B cell (primary cell): ENCODE measurements at regions of chr11 and their contacts with region 1.

Region 1: GRCh38 chr11:69675811-69676371 is 738 bp upstream of the LTO1 start:
- DNase-seq: no peak
- ATAC-seq: no peak
- H3K4me3 ChIP-seq: peak overlapping the region in 4 of 5 experiments; percentile 73 to 92 (median 80)
- H3K4me3 Mint-ChIP-seq: peak overlapping the region; percentile 94
- H3K27ac ChIP-seq: no peak overlapping the region
- H3K27ac Mint-ChIP-seq: no peak overlapping the region
- H3K4me1 ChIP-seq: peaks cover 20 to 23% of the 10 kb centered on the region in 2 donors
- H3K4me1 Mint-ChIP-seq: peaks cover 28% of the 10 kb centered on the region
- H3K27me3 ChIP-seq: peaks cover 0 to 3% (median 0%) of the 10 kb centered on the region in 4 experiments
- H3K27me3 Mint-ChIP-seq: peaks cover 6% of the 10 kb centered on the region
- CTCF ChIP-seq: no peak

Region 2: GRCh38 chr11:69380921-69381581 is 294.8 kb before region 1 on chr11:
- CTCF ChIA-PET with region 1: no interaction called
- POLR2A ChIA-PET with region 1: interaction called, 15 read pairs
- intact Hi-C with region 1: no loop called
- DNase-seq: no peak
- ATAC-seq: no peak
- H3K4me3 ChIP-seq: no peak overlapping the region
- H3K4me3 Mint-ChIP-seq: no peak overlapping the region
- H3K27ac ChIP-seq: no peak overlapping the region
- H3K27ac Mint-ChIP-seq: no peak overlapping the region
- H3K4me1 ChIP-seq: no peaks in the 10 kb centered on the region
- H3K4me1 Mint-ChIP-seq: no peaks in the 10 kb centered on the region
- H3K27me3 ChIP-seq: no peaks in the 10 kb centered on the region
- H3K27me3 Mint-ChIP-seq: no peaks in the 10 kb centered on the region
- CTCF ChIP-seq: no peak

Region 3: DNA sequence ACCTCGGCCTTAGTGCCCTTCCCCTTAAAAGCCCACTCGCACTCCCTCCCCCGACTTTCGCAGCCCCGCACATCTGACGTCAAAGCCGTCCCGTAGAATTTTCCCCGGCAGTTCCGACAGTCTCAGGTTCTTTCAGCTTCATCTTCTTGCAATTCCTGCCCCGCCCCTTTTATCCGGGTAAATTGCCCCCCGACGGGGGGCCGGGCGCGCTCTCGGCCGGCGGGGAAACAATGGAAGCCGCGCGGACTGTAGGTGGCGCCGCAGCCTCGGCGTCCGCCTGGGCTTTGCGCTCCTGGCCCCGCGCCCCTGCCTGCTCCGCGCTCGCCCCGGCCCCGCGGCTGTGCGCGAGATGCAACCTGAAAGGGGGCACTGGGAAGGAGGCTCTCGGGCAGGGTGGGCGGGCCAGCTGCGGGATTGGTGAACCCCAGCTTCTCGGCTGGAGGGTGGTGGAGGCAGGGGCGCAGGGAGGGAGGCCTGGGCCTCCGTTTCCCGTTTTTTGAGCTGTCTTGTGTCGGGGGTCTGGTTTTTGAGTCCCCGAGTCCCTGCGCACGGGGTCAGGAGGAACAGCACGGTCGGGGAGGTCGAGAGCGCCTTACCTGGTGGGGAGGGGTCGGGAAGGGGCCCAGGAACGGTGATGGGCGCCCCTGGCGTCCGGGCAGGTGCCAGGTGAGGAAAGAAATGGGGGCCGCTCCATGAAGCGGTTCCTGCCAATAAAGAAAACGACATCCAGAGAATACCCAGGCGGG is 28.8 kb after region 1 on chr11:
- CTCF ChIA-PET with region 1: no interaction called
- POLR2A ChIA-PET with region 1: no interaction called
- intact Hi-C with region 1: no loop called
- DNase-seq: no peak
- ATAC-seq: no peak
- H3K4me3 ChIP-seq: no peak overlapping the region
- H3K4me3 Mint-ChIP-seq: peak overlapping the region; percentile 39
- H3K27ac ChIP-seq: no peak overlapping the region
- H3K27ac Mint-ChIP-seq: no peak overlapping the region
- H3K4me1 ChIP-seq: peaks cover 17 to 31% of the 10 kb centered on the region in 2 donors
- H3K4me1 Mint-ChIP-seq: peaks cover 17% of the 10 kb centered on the region
- H3K27me3 ChIP-seq: peaks cover 0 to 74% (median 28%) of the 10 kb centered on the region in 4 experiments
- H3K27me3 Mint-ChIP-seq: peaks cover 47% of the 10 kb centered on the region
- CTCF ChIP-seq: no peak

Region 4: GRCh38 chr11:70202898-70203748 is 527.2 kb after region 1 on chr11 and contains the start of gene FADD:
- CTCF ChIA-PET with region 1: interaction called, 6 read pairs
- POLR2A ChIA-PET with region 1: no interaction called
- intact Hi-C with region 1: loop called (anchors 1 kb)
- DNase-seq: peak; percentile 95
- ATAC-seq: peak; percentile 78
- H3K4me3 ChIP-seq: peak within 1 kb of the TSS; percentile 80 to 98 (median 96)
- H3K4me3 Mint-ChIP-seq: peak within 1 kb of the TSS; percentile 93
- H3K27ac ChIP-seq: peak within 1 kb of the TSS; percentile 49 to 84
- H3K27ac Mint-ChIP-seq: peak within 1 kb of the TSS; percentile 94
- H3K4me1 ChIP-seq: peaks cover 18 to 26% of the 10 kb centered on the region in 2 donors
- H3K4me1 Mint-ChIP-seq: peaks cover 31% of the 10 kb centered on the region
- H3K27me3 ChIP-seq: no peaks in the 10 kb centered on the region
- H3K27me3 Mint-ChIP-seq: no peaks in the 10 kb centered on the region
- CTCF ChIP-seq: no peak
- total RNA-seq, gene FADD: 26.6 and 27.1 TPM in 2 replicates